ENCODE measurements at regions of chr12 and their contacts with region 1.

Region 1: GRCh38 chr12:104653730-104654664 is 197.2 kb downstream of the CHST11 start:
- DNase-seq: peak; percentile 36
- CTCF ChIP-seq: peak; percentile 18

Region 2: GRCh38 chr12:104671407-104672098 is 17.6 kb after region 1 on chr12:
- CTCF ChIA-PET with region 1: interaction called, 13 read pairs
- POLR2A ChIA-PET with region 1: no interaction called
- DNase-seq: peak; percentile 79
- CTCF ChIP-seq: no peak